Aorta (tissue), 5 donors: ENCODE measurements at regions of chr3 and their contacts with region 1.

Region 1: DNA sequence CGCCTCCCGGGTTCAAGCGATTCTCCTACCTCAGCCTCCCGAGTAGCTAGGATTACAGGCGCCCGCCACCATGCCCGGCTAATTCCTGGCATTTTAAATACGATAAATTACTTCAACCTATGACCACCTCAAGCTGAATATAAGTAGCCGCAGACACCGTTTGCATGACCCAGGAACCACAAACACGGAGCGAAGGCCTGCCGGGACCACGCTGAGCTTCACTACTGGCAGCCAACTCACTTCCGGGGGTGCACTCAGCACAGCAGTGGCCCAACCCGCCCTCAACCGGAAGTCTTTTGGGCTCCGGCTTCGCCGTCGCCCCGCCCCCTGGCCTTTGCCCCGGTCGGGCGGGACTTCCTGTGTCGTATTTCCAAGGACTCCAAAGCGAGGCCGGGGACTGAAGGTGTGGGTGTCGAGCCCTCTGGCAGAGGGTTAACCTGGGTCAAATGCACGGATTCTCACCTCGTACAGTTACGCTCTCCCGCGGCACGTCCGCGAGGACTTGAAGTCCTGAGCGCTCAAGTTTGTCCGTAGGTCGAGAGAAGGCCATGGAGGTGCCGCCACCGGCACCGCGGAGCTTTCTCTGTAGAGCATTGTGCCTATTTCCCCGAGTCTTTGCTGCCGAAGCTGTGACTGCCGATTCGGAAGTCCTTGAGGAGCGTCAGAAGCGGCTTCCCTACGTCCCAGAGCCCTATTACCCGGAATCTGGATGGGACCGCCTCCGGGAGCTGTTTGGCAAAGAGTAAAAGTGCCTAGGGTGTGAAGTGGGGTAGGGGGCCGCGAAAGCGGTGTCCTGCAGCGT is at the start of gene TIMMDC1:
- DNase-seq: peak; percentile 98
- ATAC-seq: peak; percentile 100
- H3K4me3 ChIP-seq: peak within 1 kb of the TSS; percentile 67 to 78
- H3K27ac ChIP-seq: peak within 1 kb of the TSS in 1 of 2 donors; percentile 49
- H3K4me1 ChIP-seq: peaks cover 0 to 4% of the 10 kb centered on the region in 2 donors
- H3K27me3 ChIP-seq: no peaks in the 10 kb centered on the region
- total RNA-seq, gene TIMMDC1: 64.0 to 83.5 TPM

Region 2: GRCh38 chr3:119463171-119464169 is 34.9 kb before region 1 on chr3 and contains the start of gene TMEM39A:
- intact Hi-C with region 1: loop called in 1 of 2 experiments (anchors 2 kb)
- DNase-seq: peak; percentile 100
- ATAC-seq: peak; percentile 99
- H3K4me3 ChIP-seq: peak within 1 kb of the TSS; percentile 80 to 87
- H3K27ac ChIP-seq: peak within 1 kb of the TSS; percentile 37 to 66
- H3K4me1 ChIP-seq: no peaks in the 10 kb centered on the region
- H3K27me3 ChIP-seq: no peaks in the 10 kb centered on the region
- total RNA-seq, gene TMEM39A: 39.6 to 45.7 TPM

Region 3: GRCh38 chr3:119690043-119690656 is 191.8 kb after region 1 on chr3:
- intact Hi-C with region 1: loop called in 1 of 2 experiments (anchors 5 kb)
- DNase-seq: no peak
- ATAC-seq: no peak
- H3K4me3 ChIP-seq: no peak overlapping the region
- H3K27ac ChIP-seq: no peak overlapping the region
- H3K4me1 ChIP-seq: no peaks in the 10 kb centered on the region
- H3K27me3 ChIP-seq: no peaks in the 10 kb centered on the region